CD4-positive, alpha-beta T cell (primary cell): ENCODE measurements at regions of chr18 and their contacts with region 1.

Region 1: GRCh38 chr18:26656944-26657536 is 108.7 kb upstream of the KCTD1 start:
- DNase-seq: peak in 2 of 14 experiments; percentile 21 to 26
- ATAC-seq: no peak
- H3K4me3 ChIP-seq: no peak overlapping the region
- H3K4me3 Mint-ChIP-seq: peak overlapping the region; percentile 59
- H3K27ac ChIP-seq: no peak overlapping the region
- H3K27ac Mint-ChIP-seq: no peak overlapping the region
- H3K4me1 ChIP-seq: peaks cover 7% of the 10 kb centered on the region
- H3K4me1 Mint-ChIP-seq: peaks cover 16% of the 10 kb centered on the region
- H3K27me3 ChIP-seq: peaks cover 31 to 61% of the 10 kb centered on the region in 2 experiments
- H3K27me3 Mint-ChIP-seq: peaks cover 81% of the 10 kb centered on the region
- CTCF ChIP-seq: no peak

Region 2: DNA sequence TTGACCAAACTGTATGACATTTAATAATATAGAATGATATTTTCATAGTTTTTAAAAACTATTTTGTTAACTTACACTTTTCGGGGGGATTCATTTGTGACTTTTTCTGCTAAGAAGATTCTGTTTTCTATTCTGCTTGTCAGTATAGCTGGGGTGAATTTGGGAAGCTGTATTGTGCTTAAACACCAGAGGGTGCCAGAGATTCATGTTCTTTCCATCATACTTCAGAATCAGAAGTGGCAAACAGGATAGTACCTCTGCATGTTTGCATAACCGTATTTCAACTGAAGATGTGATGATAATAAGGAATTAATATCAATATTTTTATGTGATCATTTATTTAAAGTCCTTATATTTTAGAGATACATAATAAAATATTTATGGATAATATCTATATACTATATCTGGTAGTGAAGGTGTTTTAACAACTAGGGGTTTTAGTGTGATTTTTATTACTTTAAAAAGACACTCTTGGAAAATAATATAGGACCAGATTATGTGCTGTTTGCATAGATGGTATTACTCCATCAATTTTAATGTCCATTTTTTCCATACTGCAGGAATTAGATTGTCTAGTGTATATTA is 349.8 kb before region 1 on chr18:
- CTCF ChIA-PET with region 1: no interaction called
- POLR2A ChIA-PET with region 1: no interaction called
- intact Hi-C with region 1: loop called in 1 of 2 experiments (anchors 10 kb)
- DNase-seq: peak in 3 of 14 experiments; percentile 13 to 43 (median 30)
- ATAC-seq: peak; percentile 64
- H3K4me3 ChIP-seq: no peak overlapping the region
- H3K4me3 Mint-ChIP-seq: no peak overlapping the region
- H3K27ac ChIP-seq: no peak overlapping the region
- H3K27ac Mint-ChIP-seq: no peak overlapping the region
- H3K4me1 ChIP-seq: no peaks in the 10 kb centered on the region
- H3K4me1 Mint-ChIP-seq: no peaks in the 10 kb centered on the region
- H3K27me3 ChIP-seq: no peaks in the 10 kb centered on the region
- H3K27me3 Mint-ChIP-seq: no peaks in the 10 kb centered on the region
- CTCF ChIP-seq: peak; percentile 33

Region 3: GRCh38 chr18:26556573-26556972 is 100.5 kb before region 1 on chr18:
- CTCF ChIA-PET with region 1: no interaction called
- POLR2A ChIA-PET with region 1: no interaction called
- intact Hi-C with region 1: no loop called
- DNase-seq: no peak
- ATAC-seq: no peak
- H3K4me3 ChIP-seq: no peak overlapping the region
- H3K4me3 Mint-ChIP-seq: no peak overlapping the region
- H3K27ac ChIP-seq: no peak overlapping the region
- H3K27ac Mint-ChIP-seq: no peak overlapping the region
- H3K4me1 ChIP-seq: no peaks in the 10 kb centered on the region
- H3K4me1 Mint-ChIP-seq: peaks cover 2% of the 10 kb centered on the region
- H3K27me3 ChIP-seq: peaks cover 3 to 25% of the 10 kb centered on the region in 2 experiments
- H3K27me3 Mint-ChIP-seq: peaks cover 43% of the 10 kb centered on the region
- CTCF ChIP-seq: no peak